ENCODE measurements at regions of chr4 and their contacts with region 1.

Region 1: DNA sequence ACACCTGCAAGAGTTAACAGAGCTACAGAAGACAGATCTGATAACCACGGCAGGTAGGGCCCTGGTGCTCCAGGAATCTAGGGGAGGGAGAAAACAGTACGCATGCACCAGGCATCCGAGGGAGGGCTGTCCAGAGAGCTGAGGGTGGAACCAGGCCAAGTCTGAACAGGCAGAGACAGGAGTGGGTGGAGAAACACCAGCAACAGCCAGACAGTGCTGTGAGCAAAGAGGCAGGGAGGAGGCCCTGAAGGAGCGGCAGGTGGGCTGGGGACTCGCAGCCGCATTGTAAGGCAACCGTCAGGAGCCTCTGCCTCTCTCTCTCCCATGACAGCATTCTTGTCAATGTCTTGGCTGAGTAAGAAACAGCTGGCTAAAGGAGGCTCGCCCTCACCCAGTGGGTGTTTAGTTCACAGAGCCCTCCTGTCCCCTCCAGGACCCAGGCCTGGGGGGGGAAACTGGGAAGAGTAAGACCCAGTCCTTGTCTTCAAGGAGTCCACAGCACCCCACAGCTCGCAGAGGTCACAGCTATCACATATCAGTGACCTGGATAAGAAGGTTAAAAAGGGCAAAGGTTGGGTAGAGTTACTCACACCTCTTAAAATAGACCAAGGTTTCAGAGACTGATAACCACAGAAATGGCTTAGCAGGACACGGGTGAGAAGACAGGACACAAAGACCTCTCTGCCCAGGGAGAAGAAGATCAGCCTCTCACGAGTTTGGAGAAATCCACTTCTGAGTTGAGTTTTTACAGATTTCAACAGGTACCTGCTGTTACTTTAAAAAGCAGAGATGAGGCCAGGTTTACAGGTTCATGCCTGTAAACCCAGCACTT is 10.5 kb downstream of the ACSL1 start:
- DNase-seq: peak; percentile 89
- ATAC-seq: peak; percentile 75
- H3K4me3 ChIP-seq: peak overlapping the region; percentile 58
- H3K27ac ChIP-seq: peak overlapping the region; percentile 83
- H3K4me1 ChIP-seq: peaks cover 64% of the 10 kb centered on the region
- H3K27me3 ChIP-seq: no peaks in the 10 kb centered on the region
- CTCF ChIP-seq: no peak
- EP300 ChIP-seq: 0 out of 4 replicates have a peak, but pooled peaks of 1 of the 2 experiments have one; percentile 14
- POLR2A ChIP-seq: peak; percentile 68
- RAD21 ChIP-seq: no peak

Region 2: GRCh38 chr4:184733654-184734524 is 81.4 kb before region 1 on chr4 and contains the start of gene CENPU:
- CTCF ChIA-PET with region 1: interaction called, 6 read pairs
- POLR2A ChIA-PET with region 1: interaction called, 5 read pairs
- RAD21 ChIA-PET with region 1: interaction called, 15 read pairs
- SMC1A ChIA-PET with region 1: interaction called, 6 read pairs
- in situ Hi-C with region 1: no loop called
- intact Hi-C with region 1: loop called (anchors 5 kb)
- DNase-seq: peak; percentile 94
- ATAC-seq: peak; percentile 93
- H3K4me3 ChIP-seq: peak within 1 kb of the TSS; percentile 91
- H3K27ac ChIP-seq: peak within 1 kb of the TSS; percentile 81
- H3K4me1 ChIP-seq: peaks cover 9% of the 10 kb centered on the region
- H3K27me3 ChIP-seq: no peaks in the 10 kb centered on the region
- CTCF ChIP-seq: no peak
- EP300 ChIP-seq: no peak
- POLR2A ChIP-seq: peak; percentile 91
- RAD21 ChIP-seq: 0 out of 2 replicates have a peak, but pooled peaks have one; percentile 22
- polyA plus RNA-seq, gene CENPU: 26.6 to 46.5 TPM

Region 3: DNA sequence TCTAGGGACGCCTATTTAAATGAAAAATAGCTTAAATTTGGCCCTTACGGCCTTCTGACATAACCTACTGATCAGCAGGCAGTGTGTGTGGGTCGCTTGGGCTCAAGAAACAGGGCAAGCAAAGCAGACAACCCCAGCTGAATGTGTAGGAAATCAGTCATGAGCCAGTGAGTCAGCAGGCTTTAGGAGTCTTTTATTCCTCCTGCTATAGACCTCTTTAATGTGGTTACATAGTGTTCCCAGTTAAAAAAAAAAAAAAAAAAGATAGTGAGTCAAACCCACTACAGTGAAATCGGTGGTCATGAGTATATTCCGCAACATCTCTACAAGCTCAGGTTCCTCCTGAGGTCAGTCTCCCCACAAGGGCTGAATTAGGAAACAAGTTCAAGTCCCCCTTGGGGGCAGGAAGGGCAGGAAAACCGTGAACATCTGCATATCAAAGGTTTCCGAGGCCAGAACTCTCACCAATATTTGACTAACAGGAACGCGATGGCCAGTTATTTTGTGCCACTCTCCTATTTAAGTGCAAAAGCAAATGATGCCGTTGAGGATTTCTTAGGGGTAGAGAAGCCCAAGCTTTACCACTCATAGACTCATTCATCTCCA is 22.2 kb before region 1 on chr4:
- CTCF ChIA-PET with region 1: interaction called, 3 read pairs
- POLR2A ChIA-PET with region 1: interaction called, 4 read pairs
- RAD21 ChIA-PET with region 1: interaction called, 7 read pairs
- SMC1A ChIA-PET with region 1: interaction called, 11 read pairs
- in situ Hi-C with region 1: no loop called
- intact Hi-C with region 1: no loop called
- DNase-seq: no peak
- ATAC-seq: peak; percentile 33; the same call in 2 of the 3 replicates
- H3K4me3 ChIP-seq: no peak overlapping the region
- H3K27ac ChIP-seq: no peak overlapping the region
- H3K4me1 ChIP-seq: peaks cover 15% of the 10 kb centered on the region
- H3K27me3 ChIP-seq: no peaks in the 10 kb centered on the region
- CTCF ChIP-seq: no peak
- EP300 ChIP-seq: no peak
- POLR2A ChIP-seq: no peak
- RAD21 ChIP-seq: no peak

Region 4: GRCh38 chr4:184851200-184851541 is 35.9 kb after region 1 on chr4:
- CTCF ChIA-PET with region 1: interaction called, 8 read pairs
- POLR2A ChIA-PET with region 1: interaction called, 15 read pairs
- RAD21 ChIA-PET with region 1: interaction called, 18 read pairs
- SMC1A ChIA-PET with region 1: interaction called, 29 read pairs
- in situ Hi-C with region 1: no loop called
- intact Hi-C with region 1: no loop called
- DNase-seq: peak; percentile 81
- ATAC-seq: peak; percentile 76
- H3K4me3 ChIP-seq: peak overlapping the region; percentile 38
- H3K27ac ChIP-seq: peak overlapping the region; percentile 54
- H3K4me1 ChIP-seq: peaks cover 63% of the 10 kb centered on the region
- H3K27me3 ChIP-seq: no peaks in the 10 kb centered on the region
- CTCF ChIP-seq: no peak
- EP300 ChIP-seq: peak; percentile 40 to 41; a peak in 3 of 4 replicates
- POLR2A ChIP-seq: no peak
- RAD21 ChIP-seq: no peak

Region 5: DNA sequence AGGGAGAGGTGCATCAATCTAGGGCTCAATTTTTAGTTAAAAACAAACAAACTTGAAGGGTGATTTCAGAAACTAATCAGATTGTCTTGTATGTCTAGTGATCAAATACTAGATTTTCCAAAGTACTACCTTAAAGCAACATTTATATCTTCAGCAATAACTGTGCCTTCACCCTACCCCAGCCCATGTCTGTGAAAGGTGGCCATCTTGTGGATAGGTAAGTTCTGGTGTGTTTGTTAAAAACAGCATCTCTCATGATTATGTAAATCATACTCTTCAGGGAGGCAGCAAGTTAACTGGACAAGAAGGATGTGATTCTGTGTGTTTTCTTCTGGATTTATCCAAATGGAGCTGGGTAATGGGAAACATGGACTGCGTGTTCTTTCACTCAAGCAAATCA is 92.0 kb after region 1 on chr4:
- CTCF ChIA-PET with region 1: interaction called, 8 read pairs
- POLR2A ChIA-PET with region 1: interaction called, 3 read pairs
- RAD21 ChIA-PET with region 1: interaction called, 3 read pairs
- SMC1A ChIA-PET with region 1: interaction called, 14 read pairs
- in situ Hi-C with region 1: no loop called
- intact Hi-C with region 1: loop called (anchors 5 kb)
- DNase-seq: no peak
- ATAC-seq: peak; percentile 84
- H3K4me3 ChIP-seq: no peak overlapping the region
- H3K27ac ChIP-seq: no peak overlapping the region
- H3K4me1 ChIP-seq: no peaks in the 10 kb centered on the region
- H3K27me3 ChIP-seq: no peaks in the 10 kb centered on the region; a peak in 1 of 4 replicates
- CTCF ChIP-seq: peak; percentile 30 to 57 (median 34); a peak in 3 of 6 replicates
- EP300 ChIP-seq: no peak
- POLR2A ChIP-seq: no peak
- RAD21 ChIP-seq: peak; percentile 74

Region 6: DNA sequence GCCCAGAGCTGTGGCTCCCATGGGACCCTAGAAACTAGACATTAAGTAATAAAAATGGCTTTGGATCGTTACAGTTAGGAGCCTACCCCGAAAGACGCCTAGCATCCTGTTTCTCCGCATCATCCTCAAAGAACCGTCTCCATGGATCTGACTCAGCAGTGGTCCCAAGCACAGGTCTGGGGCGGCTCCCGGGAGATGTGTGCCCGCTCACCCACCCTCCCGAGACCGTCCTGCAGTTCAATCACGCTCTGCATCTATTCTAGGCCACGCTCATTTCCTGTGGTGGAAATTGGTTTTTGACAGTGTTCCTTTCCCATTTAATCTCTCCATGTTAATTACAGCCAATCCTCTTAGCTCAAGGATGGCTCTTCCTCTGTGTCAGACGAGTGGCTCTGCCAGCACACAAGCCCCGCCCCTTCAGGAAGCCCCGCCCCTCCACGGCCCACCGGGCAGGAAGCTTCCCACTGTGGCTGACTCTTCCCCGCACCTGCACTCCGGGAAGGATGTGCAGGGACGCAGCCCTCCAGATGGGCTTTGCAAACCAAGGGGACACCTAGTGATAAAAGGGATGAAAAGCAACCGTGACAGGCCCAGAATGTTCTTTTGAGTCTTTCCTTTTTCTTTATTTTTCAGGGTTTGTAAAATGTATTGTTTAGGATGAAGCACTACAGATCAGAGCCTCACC is 168.6 kb after region 1 on chr4:
- CTCF ChIA-PET with region 1: interaction called, 3 read pairs
- POLR2A ChIA-PET with region 1: no interaction called
- RAD21 ChIA-PET with region 1: no interaction called
- SMC1A ChIA-PET with region 1: interaction called, 3 read pairs
- in situ Hi-C with region 1: no loop called
- intact Hi-C with region 1: loop called (anchors 10 kb)
- DNase-seq: peak; percentile 24
- ATAC-seq: peak; percentile 90
- H3K4me3 ChIP-seq: no peak overlapping the region
- H3K27ac ChIP-seq: no peak overlapping the region
- H3K4me1 ChIP-seq: 0 out of 2 replicates have a peak, but pooled peaks cover 4% of the 10 kb centered on the region
- H3K27me3 ChIP-seq: peaks cover 0 to 3% of the 10 kb centered on the region in 2 experiments; a peak in 3 of 4 replicates
- CTCF ChIP-seq: peak; percentile 44 to 62 (median 47)
- EP300 ChIP-seq: no peak
- POLR2A ChIP-seq: no peak
- RAD21 ChIP-seq: peak; percentile 87

Region 7: DNA sequence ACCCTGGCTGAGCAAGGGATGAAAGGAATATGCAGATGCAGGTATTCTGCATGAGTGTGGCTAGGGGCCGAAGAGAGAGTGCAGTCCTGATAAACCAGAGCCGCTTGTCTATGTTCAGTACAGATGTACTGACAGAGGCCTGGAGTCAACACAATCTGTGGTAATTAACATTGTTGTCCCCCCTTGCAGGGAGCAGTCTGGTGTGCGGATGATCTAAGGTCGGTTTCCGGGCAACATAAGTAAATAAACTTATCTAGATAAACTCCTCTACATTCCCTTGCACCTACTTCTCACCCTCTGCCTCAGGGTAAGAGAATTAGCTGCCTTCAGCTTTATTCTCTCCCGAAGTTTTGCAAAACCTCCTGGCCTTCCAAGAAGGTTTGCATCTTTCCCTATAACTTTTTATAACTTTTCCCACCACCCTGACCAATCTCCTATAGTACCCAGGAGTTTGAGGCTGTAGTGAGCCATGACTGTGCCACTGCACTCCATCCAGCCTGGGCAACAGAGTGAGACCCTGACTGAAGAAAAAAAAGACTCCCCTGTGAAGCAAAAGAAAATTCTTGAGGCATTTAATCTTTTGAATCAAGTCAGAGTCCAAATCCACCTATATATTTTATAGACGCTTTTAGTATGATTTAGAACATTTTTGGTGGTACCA is 420.7 kb after region 1 on chr4:
- CTCF ChIA-PET with region 1: no interaction called
- POLR2A ChIA-PET with region 1: no interaction called
- RAD21 ChIA-PET with region 1: no interaction called
- SMC1A ChIA-PET with region 1: no interaction called
- in situ Hi-C with region 1: no loop called
- intact Hi-C with region 1: no loop called
- DNase-seq: no peak
- ATAC-seq: no peak
- H3K4me3 ChIP-seq: no peak overlapping the region
- H3K27ac ChIP-seq: no peak overlapping the region
- H3K4me1 ChIP-seq: no peaks in the 10 kb centered on the region
- H3K27me3 ChIP-seq: no peaks in the 10 kb centered on the region
- CTCF ChIP-seq: no peak
- EP300 ChIP-seq: no peak
- POLR2A ChIP-seq: no peak
- RAD21 ChIP-seq: no peak